GM13977 (cell line): ENCODE measurements at regions of chr21 and their contacts with region 1.

Region 1: GRCh38 chr21:44089001-44089911 is 17.9 kb upstream of the PWP2 start:
- DNase-seq: no peak
- CTCF ChIP-seq: no peak

Region 2: DNA sequence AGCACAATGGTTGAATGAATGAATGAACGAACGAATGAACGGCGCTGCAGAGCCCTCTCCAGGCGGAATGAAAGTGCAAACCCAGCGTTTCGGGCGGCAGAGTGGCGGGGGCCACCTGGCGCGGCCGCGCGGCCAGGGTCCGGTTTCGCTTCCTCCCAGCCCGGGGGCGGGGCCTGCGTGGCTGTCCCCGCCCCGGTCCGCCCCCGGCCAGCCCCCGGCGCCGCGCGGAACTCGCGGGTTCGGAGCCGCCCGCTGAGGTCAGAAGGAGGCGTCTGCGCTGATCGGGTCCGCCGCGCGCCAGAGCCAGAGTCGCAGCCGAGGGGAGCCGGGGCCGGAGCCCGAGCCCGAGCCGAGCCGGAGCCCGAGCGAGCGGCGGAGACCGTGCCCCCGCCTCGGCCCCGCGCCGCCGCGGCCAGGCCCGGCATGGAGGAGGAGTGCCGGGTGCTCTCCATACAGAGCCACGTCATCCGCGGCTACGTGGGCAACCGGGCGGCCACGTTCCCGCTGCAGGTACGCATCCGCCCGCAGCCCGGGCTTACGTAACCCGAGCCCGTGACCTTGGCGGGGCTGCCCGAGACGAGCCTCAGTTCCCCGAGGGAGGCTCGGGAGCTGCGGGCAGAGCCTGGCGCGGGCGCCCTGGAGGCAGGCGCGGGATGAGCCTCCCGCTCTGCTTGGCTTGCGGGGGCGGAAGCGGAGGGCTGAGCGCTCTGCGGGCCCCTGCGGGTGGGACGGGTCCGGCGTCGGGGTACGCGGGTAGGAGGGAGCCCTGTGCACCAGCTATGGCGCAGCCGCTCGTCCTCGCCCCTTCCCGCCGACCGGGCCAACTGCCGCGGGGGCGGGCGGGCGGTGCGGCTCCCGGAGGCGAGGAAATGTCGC is 370.1 kb before region 1 on chr21 and contains the start of gene PDXK:
- in situ Hi-C with region 1: no loop called
- DNase-seq: peak; percentile 94
- CTCF ChIP-seq: peak; percentile 38

Region 3: DNA sequence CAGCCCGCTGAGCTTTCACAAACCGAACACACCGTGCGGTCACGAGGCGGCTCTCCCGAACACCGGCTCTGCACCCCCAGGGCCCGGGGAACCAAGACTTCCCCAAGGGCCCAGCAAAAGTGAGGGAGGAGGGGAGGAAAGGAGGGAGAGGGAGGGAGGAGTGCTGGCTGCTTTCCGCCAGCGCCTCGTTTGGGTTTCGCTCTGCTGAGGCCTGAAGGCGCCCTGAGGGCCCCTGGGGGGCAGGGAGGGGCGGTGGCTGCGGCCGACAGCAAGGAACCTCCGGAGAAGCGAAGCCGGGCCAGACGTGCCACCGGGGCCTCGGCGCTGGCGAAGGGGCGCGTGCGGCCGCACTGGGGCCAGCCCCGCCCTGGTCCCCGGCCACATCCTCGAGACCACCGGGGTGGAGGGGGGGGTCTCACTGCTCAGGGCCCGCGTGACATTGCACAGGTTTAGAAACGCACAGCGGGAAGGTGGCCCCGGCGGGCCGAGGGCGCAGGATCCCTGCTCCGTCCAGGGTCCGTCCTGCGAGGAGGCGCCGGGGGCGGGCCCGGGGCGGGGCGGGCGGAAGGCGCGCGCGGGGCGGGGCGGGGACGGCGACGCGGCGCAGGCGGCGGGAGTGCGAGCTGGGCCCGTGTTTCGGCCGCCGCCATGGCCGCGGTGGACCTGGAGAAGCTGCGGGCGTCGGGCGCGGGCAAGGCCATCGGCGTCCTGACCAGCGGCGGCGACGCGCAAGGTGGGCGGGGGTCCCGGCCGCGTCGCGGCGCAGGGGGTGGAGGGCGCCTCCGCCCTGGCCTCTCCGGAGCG is 210.4 kb after region 1 on chr21 and contains the start of gene PFKL:
- in situ Hi-C with region 1: loop called (anchors 25 kb)
- DNase-seq: peak; percentile 97
- CTCF ChIP-seq: no peak

Region 4: DNA sequence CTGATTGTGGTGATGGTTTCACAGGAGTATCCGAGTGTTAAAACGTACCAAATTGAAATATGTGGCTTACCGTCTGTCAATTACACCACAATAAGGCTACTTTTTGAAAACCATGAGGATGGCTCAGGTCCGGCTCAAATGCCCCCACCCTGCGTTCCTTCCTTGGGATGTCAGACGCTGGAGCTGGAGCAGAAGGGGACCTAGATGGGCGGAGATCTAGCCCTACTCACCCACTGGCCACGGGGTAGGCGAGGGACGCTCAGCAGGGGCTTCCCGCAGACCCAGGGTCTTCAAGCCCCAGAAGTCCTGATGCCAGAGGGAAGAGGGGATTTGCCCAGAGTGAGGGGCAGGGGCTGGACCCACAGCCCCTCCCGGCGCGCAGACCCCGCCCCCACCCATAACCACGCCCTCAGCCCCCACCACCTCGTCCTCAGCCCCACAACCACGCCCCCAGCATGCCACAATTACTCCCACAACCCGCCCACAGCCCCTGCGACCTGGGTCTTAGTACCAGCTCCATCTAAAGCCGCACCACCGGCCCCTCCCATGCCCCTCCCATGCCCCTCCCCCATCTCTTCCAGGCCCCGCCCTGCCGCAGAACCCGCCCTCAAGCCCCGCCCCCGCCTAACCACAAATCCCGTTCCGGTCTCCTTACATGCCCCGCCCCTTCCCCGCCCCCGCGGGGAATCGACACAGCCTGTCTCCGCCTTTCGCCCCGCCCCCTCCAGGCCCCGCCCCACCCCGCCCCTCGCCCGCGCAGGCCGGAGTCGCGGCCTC is 365.7 kb after region 1 on chr21 and contains the start of gene LRRC3:
- in situ Hi-C with region 1: loop called (anchors 25 kb)
- DNase-seq: peak; percentile 98
- CTCF ChIP-seq: no peak